MCF 10A (cell line): ENCODE measurements at regions of chr13 and their contacts with region 1.

Region 1: GRCh38 chr13:113275387-113275786 is 21.7 kb upstream of the LAMP1 start:
- DNase-seq: peak; percentile 57
- H3K4me3 Mint-ChIP-seq: no peak overlapping the region
- H3K27ac Mint-ChIP-seq: no peak overlapping the region
- H3K4me1 Mint-ChIP-seq: no peaks in the 10 kb centered on the region
- H3K27me3 Mint-ChIP-seq: no peaks in the 10 kb centered on the region
- CTCF ChIP-seq: peak; percentile 46

Region 2: DNA sequence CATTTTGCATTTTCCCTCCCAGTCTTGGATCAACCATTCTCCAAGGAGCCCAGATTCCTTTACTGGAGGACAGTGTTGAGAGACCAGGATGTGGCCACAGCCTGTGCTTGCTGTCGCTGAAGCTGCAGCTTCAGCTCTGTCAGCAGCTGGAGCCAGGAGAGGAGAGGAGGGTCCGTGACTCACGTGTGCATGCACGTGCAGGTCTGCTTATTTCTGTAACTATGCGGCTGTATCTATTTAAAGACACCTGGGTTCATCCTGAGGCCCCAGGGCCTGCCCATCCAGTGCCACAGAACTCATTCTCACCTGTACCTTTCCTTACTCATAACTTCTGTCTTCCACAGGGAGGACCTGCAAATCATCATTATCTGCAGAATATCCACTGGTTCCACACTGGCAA is 13.5 kb after region 1 on chr13:
- CTCF ChIA-PET with region 1: interaction called, 11 read pairs
- POLR2A ChIA-PET with region 1: interaction called, 7 read pairs
- intact Hi-C with region 1: no loop called
- DNase-seq: no peak
- H3K4me3 Mint-ChIP-seq: no peak overlapping the region
- H3K27ac Mint-ChIP-seq: no peak overlapping the region
- H3K4me1 Mint-ChIP-seq: peaks cover 14% of the 10 kb centered on the region
- H3K27me3 Mint-ChIP-seq: peaks cover 30% of the 10 kb centered on the region
- CTCF ChIP-seq: no peak

Region 3: GRCh38 chr13:113373811-113374485 is 98.6 kb after region 1 on chr13:
- CTCF ChIA-PET with region 1: no interaction called
- POLR2A ChIA-PET with region 1: no interaction called
- intact Hi-C with region 1: loop called (anchors 2 kb)
- DNase-seq: no peak
- H3K4me3 Mint-ChIP-seq: no peak overlapping the region
- H3K27ac Mint-ChIP-seq: no peak overlapping the region
- H3K4me1 Mint-ChIP-seq: no peaks in the 10 kb centered on the region
- H3K27me3 Mint-ChIP-seq: peaks cover 20% of the 10 kb centered on the region
- CTCF ChIP-seq: no peak

Region 4: DNA sequence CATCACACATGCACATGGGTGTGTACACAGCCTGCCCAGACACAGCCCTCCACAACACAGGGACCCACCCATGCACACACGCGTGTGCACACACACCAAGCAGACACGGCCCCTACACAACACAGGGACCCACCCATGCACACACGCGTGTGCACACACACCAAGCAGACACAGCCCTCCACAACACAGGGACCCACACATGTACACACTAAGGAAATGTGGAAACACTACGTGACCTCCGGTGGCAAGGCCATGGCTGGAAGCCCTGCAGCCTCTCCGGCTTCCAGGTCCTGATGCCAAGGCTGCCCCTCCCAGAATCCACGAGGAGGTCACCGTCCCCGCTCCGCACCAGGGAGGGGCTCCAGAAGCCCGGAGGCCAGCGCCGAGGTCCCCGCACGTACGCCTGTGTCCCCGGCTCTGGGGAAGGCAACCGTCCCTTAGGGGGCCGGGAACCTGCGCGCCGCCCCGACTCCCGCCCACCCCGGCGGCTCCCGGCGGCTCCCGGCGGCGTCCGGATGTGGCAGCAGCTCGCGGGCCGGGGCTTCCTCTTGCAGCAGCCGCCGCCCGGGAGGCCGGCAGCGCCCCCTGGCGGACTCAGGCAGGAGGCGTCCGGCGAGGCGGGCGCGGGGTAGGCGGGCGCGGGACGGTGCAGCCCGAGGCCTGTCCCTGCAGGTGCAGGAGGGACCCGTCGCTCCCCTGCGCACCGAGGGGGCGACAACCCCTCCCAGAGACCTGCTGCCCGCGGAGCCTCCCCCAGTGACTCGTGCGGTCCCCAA is 118.4 kb after region 1 on chr13:
- CTCF ChIA-PET with region 1: interaction called, 7 read pairs
- POLR2A ChIA-PET with region 1: no interaction called
- intact Hi-C with region 1: loop called (anchors 1 kb)
- DNase-seq: peak; percentile 72
- H3K4me3 Mint-ChIP-seq: peak overlapping the region; percentile 77
- H3K27ac Mint-ChIP-seq: no peak overlapping the region
- H3K4me1 Mint-ChIP-seq: peaks cover 5% of the 10 kb centered on the region
- H3K27me3 Mint-ChIP-seq: peaks cover 16% of the 10 kb centered on the region
- CTCF ChIP-seq: peak; percentile 78